Sigmoid colon (tissue), 7 donors: ENCODE measurements at regions of chr4 and their contacts with region 1.

Region 1: GRCh38 chr4:39638354-39639240 is at the start of gene SMIM14:
- DNase-seq: peak; percentile 100
- H3K4me3 ChIP-seq: peak within 1 kb of the TSS; percentile 83 to 95 (median 90)
- H3K27ac ChIP-seq: peak within 1 kb of the TSS; percentile 96 to 100 (median 99)
- H3K4me1 ChIP-seq: peaks cover 2 to 23% (median 19%) of the 10 kb centered on the region in 4 donors
- H3K27me3 ChIP-seq: no peaks in the 10 kb centered on the region
- CTCF ChIP-seq: peak in 1 of 4 experiments; percentile 28
- EP300 ChIP-seq: peak in 2 of 4 donors; percentile 12 to 87
- POLR2A ChIP-seq: peak; percentile 90 to 93
- total RNA-seq, gene SMIM14: 16.6 to 33.9 (median 27.8) TPM

Region 2: GRCh38 chr4:39353478-39354253 is 284.9 kb before region 1 on chr4:
- intact Hi-C with region 1: loop called (anchors 5 kb)
- DNase-seq: no peak
- H3K4me3 ChIP-seq: peak overlapping the region; percentile 6 to 46 (median 38)
- H3K27ac ChIP-seq: peak overlapping the region; percentile 73 to 82 (median 78)
- H3K4me1 ChIP-seq: peaks cover 0 to 37% (median 15%) of the 10 kb centered on the region in 4 donors
- H3K27me3 ChIP-seq: no peaks in the 10 kb centered on the region
- CTCF ChIP-seq: no peak
- EP300 ChIP-seq: no peak
- POLR2A ChIP-seq: no peak

Region 3: DNA sequence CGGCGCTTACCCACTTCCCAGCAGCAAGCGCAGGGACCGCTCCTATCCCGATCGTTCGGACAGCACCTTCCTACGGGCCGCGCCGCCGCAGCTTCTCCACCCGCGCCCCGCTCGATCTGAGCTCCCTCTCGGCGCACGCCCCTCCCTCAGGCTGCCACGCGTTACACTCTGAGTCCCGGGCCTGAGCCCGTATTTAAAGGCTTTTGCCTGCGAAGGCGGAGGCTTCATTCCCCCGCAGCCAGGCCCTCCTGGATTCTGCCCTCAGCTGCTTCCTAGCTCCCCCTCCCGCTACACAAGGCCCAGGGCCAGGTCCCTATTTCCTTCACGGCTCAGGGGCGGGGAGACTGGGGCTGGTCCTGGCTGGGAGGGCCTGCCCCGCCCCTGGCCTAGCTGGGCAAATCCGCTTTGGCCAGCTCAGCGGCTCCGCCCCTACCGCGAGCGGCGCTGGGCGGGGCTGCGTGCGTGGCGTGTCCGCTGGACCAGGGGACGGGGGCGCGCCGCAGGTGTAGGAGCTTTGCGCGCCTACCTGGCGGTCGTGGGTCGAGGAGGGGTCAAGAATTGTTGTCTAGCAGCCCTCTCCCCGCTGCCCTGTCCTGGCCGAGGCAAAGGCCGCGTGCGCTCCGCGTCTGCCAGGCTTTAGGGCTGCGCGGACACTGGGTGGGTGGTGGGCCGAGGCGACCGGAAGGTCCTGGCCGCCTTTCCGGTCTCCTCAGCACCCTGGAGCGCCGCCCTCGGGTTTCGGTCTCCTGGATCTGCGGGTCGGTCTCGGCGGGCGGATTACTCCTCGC is 111.1 kb before region 1 on chr4 and contains the start of gene UGDH:
- intact Hi-C with region 1: loop called (anchors 1 kb)
- DNase-seq: peak; percentile 98
- H3K4me3 ChIP-seq: peak within 1 kb of the TSS; percentile 70 to 92 (median 90)
- H3K27ac ChIP-seq: peak within 1 kb of the TSS; percentile 89 to 98 (median 97)
- H3K4me1 ChIP-seq: peaks cover 0 to 28% (median 21%) of the 10 kb centered on the region in 4 donors
- H3K27me3 ChIP-seq: no peaks in the 10 kb centered on the region
- CTCF ChIP-seq: no peak
- EP300 ChIP-seq: peak in 1 of 4 donors; percentile 9
- POLR2A ChIP-seq: peak; percentile 79 to 92
- total RNA-seq, gene UGDH: 33.4 to 51.2 (median 43.0) TPM

Region 4: DNA sequence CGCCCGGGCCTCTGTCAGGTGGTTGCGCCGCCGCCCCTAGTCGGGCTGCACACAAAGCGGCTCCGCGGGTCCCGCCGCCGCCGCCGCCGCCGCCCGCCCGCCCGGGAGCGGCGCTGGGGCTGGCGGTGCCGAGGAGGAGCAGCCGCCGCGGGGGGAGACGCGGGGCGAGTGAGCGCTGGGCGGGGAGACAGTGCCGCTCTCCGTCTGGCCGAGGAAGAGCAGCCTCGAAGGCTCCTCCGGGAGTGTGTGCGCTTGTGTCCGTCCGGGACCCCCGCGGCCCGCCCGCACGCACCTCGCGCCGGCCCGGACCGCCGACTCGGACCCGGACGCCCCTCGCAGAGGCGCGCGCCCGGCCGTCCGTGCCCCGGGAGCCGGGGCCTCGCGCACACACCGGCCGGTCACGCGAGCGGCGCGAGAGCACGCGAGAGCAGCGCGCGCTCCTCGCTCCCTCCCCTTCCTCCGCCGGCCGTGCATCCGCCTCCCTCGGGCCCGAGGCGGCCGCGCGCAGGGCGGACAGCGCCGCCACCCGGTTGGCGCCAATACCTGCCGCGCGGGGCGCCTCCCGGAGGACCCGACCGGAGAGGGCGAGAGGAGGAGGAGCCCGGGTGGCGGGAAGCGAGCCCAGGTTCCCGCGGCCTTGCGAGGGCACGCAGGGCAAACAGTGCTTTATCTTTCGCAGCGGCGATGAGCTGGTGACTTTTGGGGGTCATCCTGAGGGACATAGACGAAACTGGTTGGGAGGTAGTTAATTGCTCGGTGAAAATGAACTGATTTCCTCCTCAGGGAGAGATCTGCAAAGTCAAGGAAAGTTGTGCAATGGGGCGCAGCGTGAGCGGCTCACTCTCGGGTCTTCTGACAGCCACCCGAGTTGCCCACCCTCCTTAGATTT is 339.1 kb after region 1 on chr4 and contains the start of gene PDS5A:
- intact Hi-C with region 1: loop called (anchors 1 kb)
- DNase-seq: peak; percentile 93
- H3K4me3 ChIP-seq: peak within 1 kb of the TSS; percentile 66 to 99 (median 96)
- H3K27ac ChIP-seq: peak within 1 kb of the TSS; percentile 95 to 98 (median 96)
- H3K4me1 ChIP-seq: peaks cover 0 to 28% (median 26%) of the 10 kb centered on the region in 4 donors
- H3K27me3 ChIP-seq: no peaks in the 10 kb centered on the region
- CTCF ChIP-seq: peak; percentile 38 to 80 (median 65)
- EP300 ChIP-seq: no peak
- POLR2A ChIP-seq: no peak
- total RNA-seq, gene PDS5A: 57.1 to 69.6 (median 63.5) TPM

Region 5: GRCh38 chr4:40811956-40812355 is 1173.4 kb after region 1 on chr4:
- intact Hi-C with region 1: no loop called
- DNase-seq: no peak
- H3K4me3 ChIP-seq: no peak overlapping the region
- H3K27ac ChIP-seq: peak overlapping the region in 2 of 4 donors; percentile 19 to 31
- H3K4me1 ChIP-seq: no peaks in the 10 kb centered on the region
- H3K27me3 ChIP-seq: no peaks in the 10 kb centered on the region
- CTCF ChIP-seq: no peak
- EP300 ChIP-seq: no peak
- POLR2A ChIP-seq: no peak